Posterior vena cava (tissue), 2 donors: ENCODE measurements at regions of chr10 and their contacts with region 1.

Region 1: DNA sequence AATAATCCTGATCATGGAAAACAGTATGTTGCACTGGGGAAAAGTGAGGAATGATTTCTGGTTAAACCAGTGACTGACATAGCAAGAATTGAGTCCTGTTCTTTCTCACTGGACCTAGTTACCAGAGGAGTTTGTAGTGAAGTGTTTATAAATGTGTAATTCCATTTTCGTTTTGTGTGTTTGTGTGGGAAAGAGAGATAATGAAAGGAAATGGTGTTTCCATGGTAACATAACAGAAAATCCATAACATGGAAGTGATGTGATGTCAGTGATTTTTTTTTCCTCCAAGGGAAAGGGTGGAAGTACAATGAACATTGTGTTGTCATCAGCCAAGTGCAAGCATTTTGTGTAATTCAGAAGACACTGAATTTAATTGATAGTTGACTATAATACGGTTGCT is 283.9 kb downstream of the PLXDC2 start:
- DNase-seq: no peak

Region 2: DNA sequence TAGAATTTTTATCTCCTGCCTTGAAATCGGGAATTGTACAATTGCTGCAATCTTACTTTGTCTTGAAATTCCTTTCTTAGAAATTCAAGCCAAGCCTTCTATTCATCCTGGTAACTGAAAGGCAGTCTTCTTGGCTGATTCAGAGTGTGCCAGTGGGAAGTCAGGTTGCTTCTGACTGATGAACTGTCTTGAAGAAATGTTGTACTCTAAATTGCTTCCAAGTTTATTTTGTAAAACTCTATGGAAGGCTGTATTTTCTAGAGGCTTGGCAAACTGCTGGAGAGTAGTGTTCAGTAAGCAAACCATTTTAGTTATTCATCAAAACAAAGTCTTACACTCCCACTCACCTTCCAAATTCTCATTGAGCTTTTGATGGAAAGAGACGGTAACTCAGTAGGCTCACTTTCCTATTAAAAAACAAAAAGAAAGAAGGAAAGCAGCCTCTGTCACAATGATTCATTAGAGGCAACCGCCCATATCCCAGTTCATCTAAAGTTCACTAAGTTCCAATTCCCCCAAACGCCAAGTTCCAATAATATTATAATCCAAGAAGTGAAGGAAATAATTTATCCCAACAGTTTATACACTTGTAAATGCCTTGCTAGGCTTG is 1239.4 kb before region 1 on chr10:
- intact Hi-C with region 1: loop called in 1 of 2 experiments (anchors 10 kb)
- DNase-seq: no peak

Region 3: GRCh38 chr10:19833170-19833824 is 266.9 kb before region 1 on chr10:
- intact Hi-C with region 1: loop called in 1 of 2 experiments (anchors 10 kb)
- DNase-seq: no peak

Region 4: DNA sequence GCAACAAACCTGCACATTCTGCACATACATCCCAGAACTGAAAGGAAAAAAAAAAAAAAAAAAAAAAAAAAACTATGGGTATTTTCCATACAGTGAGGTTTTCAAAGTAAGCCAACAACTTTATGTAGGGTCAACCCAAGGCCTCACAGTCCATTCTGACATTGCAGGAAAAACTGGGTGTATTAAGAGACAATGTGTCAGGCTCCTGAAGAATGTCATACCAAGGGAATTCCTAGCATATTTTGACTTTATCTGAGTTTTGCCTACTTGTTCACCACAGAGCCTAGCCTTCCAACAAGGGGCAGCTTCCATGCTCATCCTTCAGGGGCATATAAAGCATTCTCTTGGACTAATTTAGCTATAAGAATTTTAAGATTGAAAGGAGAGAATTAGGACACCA is 84.9 kb after region 1 on chr10:
- intact Hi-C with region 1: no loop called
- DNase-seq: no peak